Sigmoid colon (tissue), 7 donors: ENCODE measurements at regions of chr15 and their contacts with region 1.

Region 1: GRCh38 chr15:61069394-61070075 is 159.6 kb downstream of the RORA start:
- DNase-seq: no peak
- H3K4me3 ChIP-seq: no peak overlapping the region
- H3K27ac ChIP-seq: no peak overlapping the region
- H3K4me1 ChIP-seq: peaks cover 0 to 22% (median 7%) of the 10 kb centered on the region in 4 donors
- H3K27me3 ChIP-seq: no peaks in the 10 kb centered on the region
- CTCF ChIP-seq: no peak
- EP300 ChIP-seq: no peak
- POLR2A ChIP-seq: no peak

Region 2: DNA sequence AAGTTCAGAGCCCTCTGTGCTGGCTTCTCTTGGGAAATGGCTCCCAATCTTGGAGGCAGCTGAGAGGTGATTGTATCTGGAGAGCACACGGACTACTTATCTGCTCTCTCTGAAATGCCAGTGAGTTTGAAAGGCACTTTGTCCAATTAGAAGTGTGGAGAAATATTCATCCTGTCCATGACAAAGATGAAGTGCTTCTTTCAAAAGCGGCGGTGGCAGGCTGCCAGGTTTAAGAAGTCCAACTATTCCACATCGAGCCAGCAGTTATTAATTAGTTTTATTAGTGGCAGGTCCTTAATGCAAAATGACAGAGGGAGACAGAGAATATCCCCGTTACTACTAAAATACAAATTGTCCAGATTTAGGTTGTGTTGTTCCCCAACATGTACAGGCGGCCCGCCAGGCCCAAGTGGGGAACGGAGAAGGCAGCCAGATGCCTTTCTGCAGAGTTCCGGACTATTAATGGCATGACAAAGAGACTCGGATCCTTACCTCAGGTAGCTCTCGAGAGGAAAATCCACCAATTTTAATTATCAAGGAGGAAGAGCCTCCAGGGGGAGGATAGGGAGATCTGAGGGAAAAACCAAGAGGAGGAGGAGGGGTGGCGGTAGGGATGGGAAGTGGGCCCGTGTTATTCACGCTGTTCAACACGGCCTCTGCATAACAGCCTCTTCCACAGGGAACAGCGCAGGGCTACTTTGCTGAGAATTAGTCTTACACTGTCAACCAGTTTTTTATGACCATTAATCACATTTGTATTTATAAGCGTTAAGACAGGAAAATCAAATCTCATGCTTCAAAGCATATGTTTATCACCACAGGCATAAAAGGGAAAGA is 117.6 kb after region 1 on chr15:
- intact Hi-C with region 1: no loop called
- DNase-seq: peak; percentile 71
- H3K4me3 ChIP-seq: peak overlapping the region in 3 of 4 donors; percentile 9 to 18 (median 13)
- H3K27ac ChIP-seq: peak overlapping the region in 3 of 4 donors; percentile 31 to 44 (median 41)
- H3K4me1 ChIP-seq: peaks cover 0 to 27% (median 13%) of the 10 kb centered on the region in 4 donors
- H3K27me3 ChIP-seq: no peaks in the 10 kb centered on the region
- CTCF ChIP-seq: no peak
- EP300 ChIP-seq: no peak
- POLR2A ChIP-seq: no peak

Region 3: DNA sequence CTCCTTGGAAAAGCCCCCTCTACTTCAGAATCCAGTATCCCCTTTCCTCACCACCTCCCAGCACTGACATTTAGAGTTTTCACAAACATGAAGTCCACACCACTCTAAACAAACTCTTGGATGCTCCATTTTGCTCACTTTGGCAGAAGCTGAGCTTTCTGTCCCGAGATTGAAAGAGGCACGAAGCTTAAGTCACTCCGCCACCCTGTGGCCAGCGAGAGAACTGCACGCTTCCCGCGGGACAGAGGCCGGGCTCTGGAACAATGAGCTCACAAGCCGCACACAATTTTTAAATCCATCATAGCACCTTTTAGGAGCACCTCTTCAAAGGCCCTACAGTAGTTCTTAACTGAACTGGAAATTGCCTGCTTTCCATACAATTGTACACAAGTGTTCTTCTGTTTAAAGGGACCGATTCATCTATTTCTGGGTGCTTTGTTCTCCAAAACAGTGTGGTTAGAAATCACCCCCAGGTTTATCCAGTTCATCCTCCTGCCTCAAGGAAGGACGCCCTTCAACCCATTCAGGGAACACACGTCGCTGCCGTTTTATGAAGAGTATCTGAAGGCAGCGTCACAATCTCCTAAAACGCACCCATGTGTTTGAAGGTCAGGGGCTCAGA is 764.7 kb after region 1 on chr15:
- intact Hi-C with region 1: loop called (anchors 10 kb)
- DNase-seq: peak; percentile 88
- H3K4me3 ChIP-seq: no peak overlapping the region
- H3K27ac ChIP-seq: no peak overlapping the region
- H3K4me1 ChIP-seq: peaks cover 0 to 5% (median 0%) of the 10 kb centered on the region in 4 donors
- H3K27me3 ChIP-seq: no peaks in the 10 kb centered on the region
- CTCF ChIP-seq: peak; percentile 78 to 95 (median 85)
- EP300 ChIP-seq: no peak
- POLR2A ChIP-seq: no peak